Calu3 (cell line): ENCODE measurements at regions of chr18 and their contacts with region 1.

Region 1: DNA sequence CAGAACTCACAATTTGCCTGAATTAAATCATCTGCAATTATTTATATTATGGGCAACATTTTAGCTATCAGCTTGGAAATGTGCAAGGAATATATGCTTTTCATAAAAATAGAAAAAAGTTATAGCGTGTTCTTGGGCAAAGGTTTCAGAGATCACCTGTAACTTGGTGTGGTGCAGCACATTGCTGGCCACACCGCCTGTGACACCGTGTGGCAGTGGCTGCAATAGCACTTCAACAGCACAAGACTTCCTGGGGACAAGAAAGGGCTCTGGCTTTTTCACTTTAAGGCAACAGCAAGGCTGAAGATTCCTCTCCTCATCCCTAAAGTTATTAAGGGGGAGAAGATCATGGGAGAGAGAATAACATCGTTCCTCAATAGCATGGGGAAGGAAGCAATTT is 14.8 kb upstream of the SERPINB3 start:
- DNase-seq: peak; percentile 65
- H3K4me3 Mint-ChIP-seq: no peak overlapping the region
- H3K27ac Mint-ChIP-seq: no peak overlapping the region
- H3K4me1 Mint-ChIP-seq: peaks cover 26% of the 10 kb centered on the region
- H3K27me3 Mint-ChIP-seq: no peaks in the 10 kb centered on the region
- CTCF ChIP-seq: peak; percentile 70

Region 2: DNA sequence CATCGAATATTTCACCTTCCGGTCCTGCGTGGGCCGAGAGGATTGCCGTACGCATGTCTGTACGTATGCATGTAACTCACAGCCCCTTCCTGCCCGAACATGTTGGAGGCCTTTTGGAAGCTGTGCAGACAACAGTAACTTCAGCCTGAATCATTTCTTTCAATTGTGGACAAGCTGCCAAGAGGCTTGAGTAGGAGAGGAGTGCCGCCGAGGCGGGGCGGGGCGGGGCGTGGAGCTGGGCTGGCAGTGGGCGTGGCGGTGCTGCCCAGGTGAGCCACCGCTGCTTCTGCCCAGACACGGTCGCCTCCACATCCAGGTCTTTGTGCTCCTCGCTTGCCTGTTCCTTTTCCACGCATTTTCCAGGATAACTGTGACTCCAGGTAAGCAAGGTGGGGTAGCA is 199.9 kb before region 1 on chr18 and contains the start of gene SERPINB5:
- CTCF ChIA-PET with region 1: no interaction called
- intact Hi-C with region 1: no loop called
- DNase-seq: peak; percentile 96
- H3K4me3 Mint-ChIP-seq: peak within 1 kb of the TSS; percentile 84
- H3K27ac Mint-ChIP-seq: peak within 1 kb of the TSS; percentile 67
- H3K4me1 Mint-ChIP-seq: peaks cover 40% of the 10 kb centered on the region
- H3K27me3 Mint-ChIP-seq: no peaks in the 10 kb centered on the region
- CTCF ChIP-seq: no peak
- total RNA-seq, gene SERPINB5: 34.0 and 34.1 TPM in 2 replicates

Region 3: DNA sequence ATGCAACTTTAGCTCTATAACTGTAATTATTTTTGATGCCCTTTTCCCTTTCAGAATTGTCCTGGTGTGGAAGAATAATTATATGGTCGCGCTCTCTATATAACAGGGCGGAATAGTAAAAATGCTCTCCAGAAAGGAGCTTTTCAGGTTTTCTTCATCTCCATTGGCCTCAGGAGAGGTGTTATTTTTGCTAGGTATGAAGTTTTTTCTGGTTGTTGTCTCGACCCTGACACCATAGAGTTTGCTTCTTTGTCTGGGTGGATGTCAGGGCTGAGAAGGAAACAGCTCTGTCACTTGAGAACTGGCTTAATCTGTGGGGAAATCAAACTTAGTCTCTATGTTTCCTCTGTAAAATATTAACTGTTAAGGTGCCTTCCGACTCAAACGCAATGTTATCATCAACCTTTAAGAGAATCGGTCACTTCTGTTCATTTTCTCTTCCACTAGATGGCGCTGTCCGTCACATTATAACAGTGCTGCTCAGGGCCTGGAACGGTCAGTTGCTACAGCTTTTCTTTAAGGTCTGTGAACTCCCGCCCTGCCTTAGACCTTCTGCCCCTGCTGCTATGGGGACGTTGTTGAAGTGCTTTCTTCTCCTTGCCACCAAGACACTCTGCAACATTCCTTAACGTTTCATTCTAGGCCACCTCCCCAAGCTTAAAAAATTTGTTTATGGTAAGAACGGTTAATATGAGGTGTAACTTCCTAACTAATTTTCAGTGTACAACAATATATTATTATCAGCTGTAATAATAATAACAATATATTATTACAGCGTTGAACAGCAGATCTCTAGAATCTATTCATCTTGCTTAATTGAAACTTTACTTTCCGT is 158.1 kb before region 1 on chr18:
- CTCF ChIA-PET with region 1: no interaction called
- intact Hi-C with region 1: loop called (anchors 1 kb)
- DNase-seq: peak; percentile 69
- H3K4me3 Mint-ChIP-seq: no peak overlapping the region
- H3K27ac Mint-ChIP-seq: no peak overlapping the region
- H3K4me1 Mint-ChIP-seq: peaks cover 15% of the 10 kb centered on the region
- H3K27me3 Mint-ChIP-seq: no peaks in the 10 kb centered on the region
- CTCF ChIP-seq: peak; percentile 57

Region 4: DNA sequence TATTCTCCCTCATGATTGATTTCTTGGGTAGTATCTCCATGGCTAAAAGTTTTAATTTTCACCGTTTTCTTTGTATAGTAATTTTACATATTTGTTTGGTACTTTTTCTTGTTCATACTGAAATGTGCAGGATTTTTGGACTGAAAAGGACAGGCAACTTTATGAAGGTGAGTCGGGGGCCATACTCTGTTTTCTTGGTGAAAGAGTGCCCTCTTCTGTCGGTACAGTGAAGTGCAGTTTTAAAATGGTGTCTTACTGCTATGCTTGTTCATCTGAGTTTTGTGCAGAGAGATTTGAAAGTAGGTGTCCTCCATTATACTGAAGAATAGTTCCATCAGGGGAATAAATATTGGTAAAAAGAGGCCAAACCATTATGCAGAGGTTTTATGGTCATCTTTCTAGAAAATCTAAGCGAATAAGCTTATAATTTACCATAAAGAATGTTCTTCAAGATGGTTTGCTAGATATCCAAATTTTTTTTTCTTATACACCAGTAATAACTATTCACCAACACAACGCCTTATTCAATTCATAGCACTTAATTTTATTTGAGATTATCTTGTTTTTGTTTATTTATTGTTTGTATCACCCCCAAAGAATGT is 98.1 kb before region 1 on chr18:
- CTCF ChIA-PET with region 1: no interaction called
- intact Hi-C with region 1: loop called (anchors 5 kb)
- DNase-seq: peak; percentile 58
- H3K4me3 Mint-ChIP-seq: no peak overlapping the region
- H3K27ac Mint-ChIP-seq: no peak overlapping the region
- H3K4me1 Mint-ChIP-seq: no peaks in the 10 kb centered on the region
- H3K27me3 Mint-ChIP-seq: no peaks in the 10 kb centered on the region
- CTCF ChIP-seq: peak; percentile 74

Region 5: DNA sequence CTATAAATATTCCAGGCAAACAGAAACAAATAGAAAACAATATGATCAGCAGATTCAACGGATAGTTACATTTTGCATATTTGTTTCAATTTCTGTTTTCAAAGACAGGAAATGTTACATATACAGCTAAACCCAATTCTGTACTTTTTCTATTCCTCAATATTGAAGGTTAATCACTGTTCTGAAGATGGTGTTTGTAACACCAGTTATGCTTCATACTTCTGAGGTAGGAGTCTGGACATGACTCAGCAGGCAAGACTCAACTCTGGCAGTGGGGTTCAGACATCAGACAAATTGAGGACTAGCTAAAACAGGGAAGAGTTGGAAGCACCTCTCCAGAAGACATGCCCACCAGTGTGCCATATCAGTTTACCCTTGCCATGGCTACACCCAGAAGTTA is 72.8 kb before region 1 on chr18:
- CTCF ChIA-PET with region 1: no interaction called
- intact Hi-C with region 1: loop called (anchors 1 kb)
- DNase-seq: no peak
- H3K4me3 Mint-ChIP-seq: no peak overlapping the region
- H3K27ac Mint-ChIP-seq: no peak overlapping the region
- H3K4me1 Mint-ChIP-seq: peaks cover 37% of the 10 kb centered on the region
- H3K27me3 Mint-ChIP-seq: no peaks in the 10 kb centered on the region
- CTCF ChIP-seq: no peak

Region 6: DNA sequence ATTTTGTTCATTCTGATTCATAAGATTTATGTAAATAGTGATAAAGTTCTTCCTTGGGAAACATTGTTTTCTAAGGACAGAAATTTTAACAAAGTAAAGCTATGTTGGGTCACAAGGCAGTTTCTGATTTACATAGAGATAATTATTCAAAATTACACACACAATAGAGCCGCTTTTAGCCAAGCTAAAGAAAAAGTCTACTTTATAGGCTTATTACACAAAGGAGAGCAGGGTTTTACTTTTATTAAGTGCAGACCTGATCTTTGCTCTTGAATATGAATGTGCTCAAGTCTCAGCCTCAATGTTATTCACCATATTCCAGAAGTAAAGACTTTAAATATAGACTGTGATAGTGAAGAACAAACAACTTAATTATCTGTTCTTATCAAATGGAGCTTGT is 1260.1 kb after region 1 on chr18:
- CTCF ChIA-PET with region 1: no interaction called
- intact Hi-C with region 1: no loop called
- DNase-seq: no peak
- H3K4me3 Mint-ChIP-seq: no peak overlapping the region
- H3K27ac Mint-ChIP-seq: no peak overlapping the region
- H3K4me1 Mint-ChIP-seq: no peaks in the 10 kb centered on the region
- H3K27me3 Mint-ChIP-seq: no peaks in the 10 kb centered on the region
- CTCF ChIP-seq: no peak